ENCODE measurements at regions of chr13 and their contacts with region 1.

Region 1: GRCh38 chr13:50529154-50529882 is 314.2 kb downstream of the DLEU7 start:
- DNase-seq: no peak
- H3K4me3 ChIP-seq: no peak overlapping the region
- H3K4me3 Mint-ChIP-seq: no peak overlapping the region
- H3K27ac ChIP-seq: no peak overlapping the region
- H3K27ac Mint-ChIP-seq: peak overlapping the region in 2 of 7 donors; percentile 61 to 67
- H3K4me1 ChIP-seq: peaks cover 19 to 32% of the 10 kb centered on the region in 2 donors
- H3K4me1 Mint-ChIP-seq: peaks cover 36% of the 10 kb centered on the region
- H3K27me3 ChIP-seq: no peaks in the 10 kb centered on the region
- H3K27me3 Mint-ChIP-seq: peaks cover 0 to 2% (median 0%) of the 10 kb centered on the region in 3 donors
- CTCF ChIP-seq: no peak

Region 2: GRCh38 chr13:49976314-49977258 is 552.7 kb before region 1 on chr13:
- intact Hi-C with region 1: loop called in 1 of 2 experiments (anchors 10 kb)
- DNase-seq: peak; percentile 54 to 74 (median 71)
- H3K4me3 ChIP-seq: no peak overlapping the region
- H3K4me3 Mint-ChIP-seq: no peak overlapping the region
- H3K27ac ChIP-seq: no peak overlapping the region
- H3K27ac Mint-ChIP-seq: peak overlapping the region in 1 of 7 donors; percentile 38
- H3K4me1 ChIP-seq: no peaks in the 10 kb centered on the region
- H3K4me1 Mint-ChIP-seq: peaks cover 11% of the 10 kb centered on the region
- H3K27me3 ChIP-seq: no peaks in the 10 kb centered on the region
- H3K27me3 Mint-ChIP-seq: peaks cover 0 to 2% (median 0%) of the 10 kb centered on the region in 3 donors
- CTCF ChIP-seq: peak; percentile 94